ENCODE measurements at regions of chr12 and their contacts with region 1.

Region 1: GRCh38 chr12:53220801-53221202 is 11.2 kb downstream of the RARG start:
- DNase-seq: peak; percentile 81
- ATAC-seq: peak; percentile 80
- H3K4me3 ChIP-seq: peak overlapping the region; percentile 75 to 89 (median 89)
- H3K27ac ChIP-seq: peak overlapping the region; percentile 88
- H3K4me1 ChIP-seq: peaks cover 73% of the 10 kb centered on the region
- H3K27me3 ChIP-seq: peaks cover 0 to 21% of the 10 kb centered on the region in 2 experiments; a peak in 4 of 5 replicates
- CTCF ChIP-seq: no peak
- EP300 ChIP-seq: no peak
- POLR2A ChIP-seq: no peak
- RAD21 ChIP-seq: no peak

Region 2: DNA sequence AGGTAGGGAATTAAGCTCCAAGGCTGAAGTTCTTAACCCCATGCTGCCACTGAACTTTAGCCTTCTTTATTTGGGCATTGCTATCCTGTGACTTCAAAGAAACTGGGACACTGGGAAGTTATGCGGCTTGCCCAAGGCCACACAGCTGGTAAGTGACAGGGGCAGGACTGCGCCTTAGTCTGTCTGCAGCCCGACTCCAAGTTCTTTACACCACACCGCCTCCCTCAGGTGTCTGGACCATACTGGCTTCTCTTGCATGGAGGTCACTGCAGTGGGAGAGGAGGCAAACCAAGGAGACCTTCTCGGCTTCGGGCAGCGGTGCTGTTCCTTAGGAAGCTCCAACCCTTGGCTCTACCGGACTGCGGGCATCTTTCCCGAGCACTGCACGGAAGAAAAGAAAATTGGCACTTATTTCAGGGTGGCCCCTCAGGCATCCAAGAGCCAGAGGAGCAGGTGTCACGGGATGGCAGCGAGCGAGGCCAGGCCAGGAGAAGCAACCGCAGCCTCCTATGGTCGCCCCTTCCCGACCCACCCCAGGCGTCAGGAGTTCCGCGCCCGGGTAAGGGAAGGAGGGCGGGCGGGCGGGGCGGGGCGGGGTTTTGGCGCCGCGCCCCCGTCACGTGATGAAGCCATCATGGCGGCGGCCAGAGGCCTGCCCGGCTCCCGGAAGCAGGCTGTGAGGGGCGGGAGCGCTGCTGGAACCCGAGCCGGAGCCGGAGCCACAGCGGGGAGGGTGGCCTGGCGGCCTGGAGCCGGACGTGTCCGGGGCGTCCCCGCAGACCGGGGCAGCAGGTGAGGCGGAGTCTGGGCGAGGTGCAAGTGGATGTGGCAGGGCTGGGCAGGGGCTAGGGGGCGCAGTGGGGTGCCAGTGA is 30.9 kb after region 1 on chr12:
- CTCF ChIA-PET with region 1: no interaction called
- POLR2A ChIA-PET with region 1: interaction called, 17 read pairs
- in situ Hi-C with region 1: no loop called
- intact Hi-C with region 1: no loop called
- DNase-seq: peak; percentile 81
- ATAC-seq: peak; percentile 85
- H3K4me3 ChIP-seq: peak overlapping the region; percentile 85 to 96 (median 93)
- H3K27ac ChIP-seq: peak overlapping the region; percentile 80
- H3K4me1 ChIP-seq: peaks cover 37% of the 10 kb centered on the region
- H3K27me3 ChIP-seq: no peaks in the 10 kb centered on the region
- CTCF ChIP-seq: peak; percentile 75
- EP300 ChIP-seq: peak in 1 of 2 experiments; percentile 40; a peak in 1 of 4 replicates
- POLR2A ChIP-seq: peak; percentile 70 to 75
- RAD21 ChIP-seq: peak; percentile 37

Region 3: GRCh38 chr12:53267999-53268647 is 47.3 kb after region 1 on chr12 and contains the start of gene ESPL1:
- CTCF ChIA-PET with region 1: no interaction called
- POLR2A ChIA-PET with region 1: interaction called, 3 read pairs
- in situ Hi-C with region 1: loop called (anchors 5 kb)
- intact Hi-C with region 1: no loop called
- DNase-seq: peak; percentile 65
- ATAC-seq: peak; percentile 91
- H3K4me3 ChIP-seq: peak within 1 kb of the TSS; percentile 77 to 96 (median 91)
- H3K27ac ChIP-seq: peak within 1 kb of the TSS; percentile 32
- H3K4me1 ChIP-seq: peaks cover 28% of the 10 kb centered on the region
- H3K27me3 ChIP-seq: no peaks in the 10 kb centered on the region
- CTCF ChIP-seq: peak; percentile 77
- EP300 ChIP-seq: no peak
- POLR2A ChIP-seq: no peak
- RAD21 ChIP-seq: peak; percentile 57
- total RNA-seq, gene ESPL1: 11.5 and 11.6 TPM in 2 replicates

Region 4: DNA sequence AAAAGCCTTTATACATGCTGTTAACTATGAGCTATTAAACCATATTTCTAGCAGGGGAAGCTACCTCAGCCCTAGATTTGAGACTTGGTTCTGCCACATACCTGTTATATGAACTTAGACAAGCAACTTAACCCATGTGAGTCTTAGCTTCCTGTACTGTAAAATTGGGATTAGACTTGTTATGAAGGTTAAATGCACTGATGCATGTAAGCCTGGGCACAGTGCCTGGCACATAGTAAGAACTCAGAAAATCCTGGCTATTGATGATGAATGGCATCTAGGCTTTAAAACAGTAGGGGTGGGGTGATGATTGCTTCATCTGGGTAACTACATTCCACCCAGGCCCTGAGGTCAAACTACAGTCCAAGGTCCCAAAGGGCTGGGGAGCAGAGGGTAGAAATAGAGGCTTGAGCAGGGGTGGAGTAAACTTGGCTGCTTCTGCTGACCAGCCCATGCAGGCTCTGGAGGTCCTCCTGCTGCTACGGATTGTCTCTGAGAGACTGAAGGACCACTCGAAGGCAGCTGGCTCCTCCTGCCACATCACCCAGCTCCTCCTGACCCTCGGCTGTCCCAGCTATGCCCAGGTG is 58.6 kb after region 1 on chr12:
- CTCF ChIA-PET with region 1: no interaction called
- POLR2A ChIA-PET with region 1: no interaction called
- in situ Hi-C with region 1: no loop called
- intact Hi-C with region 1: no loop called
- DNase-seq: peak; percentile 16
- ATAC-seq: peak; percentile 71
- H3K4me3 ChIP-seq: no peak overlapping the region
- H3K27ac ChIP-seq: peak overlapping the region; percentile 49
- H3K4me1 ChIP-seq: peaks cover 15% of the 10 kb centered on the region
- H3K27me3 ChIP-seq: no peaks in the 10 kb centered on the region; a peak in 1 of 5 replicates
- CTCF ChIP-seq: no peak
- EP300 ChIP-seq: no peak; a peak in 1 of 4 replicates
- POLR2A ChIP-seq: 0 out of 4 replicates have a peak, but pooled peaks of 1 of the 2 experiments have one; percentile 21
- RAD21 ChIP-seq: no peak

Region 5: DNA sequence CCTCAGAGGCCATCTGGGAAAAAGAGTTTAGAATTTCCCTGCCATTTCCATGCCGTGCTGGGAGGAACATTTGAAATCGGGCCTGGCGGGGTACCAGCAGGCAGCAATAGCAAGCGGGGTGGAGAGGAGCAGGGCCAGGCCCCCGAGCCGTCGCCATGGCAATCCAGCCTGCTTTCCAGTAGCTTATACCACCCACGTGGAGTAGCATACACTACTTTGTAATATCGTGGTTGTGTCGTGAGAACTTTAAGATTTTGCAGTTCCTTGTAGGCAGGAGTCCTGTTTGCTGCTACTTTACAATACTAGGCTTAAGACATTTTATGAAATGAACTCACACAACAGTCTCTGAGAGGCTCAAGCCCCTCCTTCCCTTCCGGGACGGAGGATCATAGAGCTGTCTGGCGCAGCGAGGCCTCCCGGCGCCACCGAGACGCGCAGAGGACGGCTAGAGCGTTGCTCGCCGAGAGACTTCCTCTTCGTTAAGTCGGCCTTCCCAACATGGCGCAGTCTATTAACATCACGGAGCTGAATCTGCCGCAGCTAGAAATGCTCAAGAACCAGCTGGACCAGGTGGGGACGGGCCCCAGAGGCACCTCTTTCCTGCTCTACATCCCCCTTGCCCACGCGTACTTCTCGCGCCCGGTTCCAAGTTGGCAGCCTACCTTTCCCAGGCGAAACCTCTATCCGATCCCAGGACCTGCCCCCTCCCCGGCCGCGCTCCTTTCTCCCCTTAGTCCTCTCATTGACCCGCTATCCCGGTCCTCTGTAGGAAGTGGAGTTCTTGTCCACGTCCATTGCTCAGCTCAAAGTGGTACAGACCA is 74.5 kb after region 1 on chr12 and contains the start of gene PFDN5:
- CTCF ChIA-PET with region 1: no interaction called
- POLR2A ChIA-PET with region 1: interaction called, 14 read pairs
- in situ Hi-C with region 1: no loop called
- intact Hi-C with region 1: loop called (anchors 5 kb)
- DNase-seq: peak; percentile 84
- ATAC-seq: peak; percentile 90
- H3K4me3 ChIP-seq: peak within 1 kb of the TSS; percentile 90 to 98 (median 96)
- H3K27ac ChIP-seq: peak within 1 kb of the TSS; percentile 74
- H3K4me1 ChIP-seq: peaks cover 40% of the 10 kb centered on the region
- H3K27me3 ChIP-seq: peaks cover 0 to 4% of the 10 kb centered on the region in 2 experiments; a peak in 1 of 5 replicates
- CTCF ChIP-seq: no peak; the same call in 1 of the 2 replicates
- EP300 ChIP-seq: 0 out of 4 replicates have a peak, but pooled peaks of 1 of the 2 experiments have one; percentile 7
- POLR2A ChIP-seq: peak; percentile 84 to 88
- RAD21 ChIP-seq: no peak
- total RNA-seq, gene PFDN5: 462 and 578 TPM in 2 replicates

Region 6: DNA sequence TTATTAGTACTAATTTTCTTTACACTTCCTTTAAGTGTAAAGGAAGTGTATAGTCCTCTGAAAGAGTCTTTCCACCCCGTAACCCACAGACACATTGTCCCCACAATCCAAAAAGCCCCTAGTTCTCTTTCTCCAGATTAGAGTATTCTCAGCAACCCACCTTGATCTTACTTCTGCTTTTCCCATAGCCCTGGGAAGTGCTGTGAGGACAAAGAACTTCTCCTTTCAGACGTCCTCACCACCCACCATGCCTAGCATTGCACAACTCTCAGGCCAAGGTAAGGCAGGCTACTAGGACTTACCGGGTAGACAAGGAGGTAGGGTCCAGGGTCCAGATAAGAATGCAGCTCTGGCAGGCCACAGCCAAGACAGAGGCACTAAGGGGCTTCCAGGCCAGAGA is 93.2 kb after region 1 on chr12:
- CTCF ChIA-PET with region 1: no interaction called
- POLR2A ChIA-PET with region 1: no interaction called
- in situ Hi-C with region 1: no loop called
- intact Hi-C with region 1: no loop called
- DNase-seq: no peak
- ATAC-seq: no peak
- H3K4me3 ChIP-seq: no peak overlapping the region
- H3K27ac ChIP-seq: no peak overlapping the region
- H3K4me1 ChIP-seq: no peaks in the 10 kb centered on the region
- H3K27me3 ChIP-seq: no peaks in the 10 kb centered on the region
- CTCF ChIP-seq: no peak
- EP300 ChIP-seq: no peak
- POLR2A ChIP-seq: no peak
- RAD21 ChIP-seq: no peak

Measured in HepG2 (cell line).